ENCODE measurements at regions of chr2 and their contacts with region 1.

Region 1: GRCh38 chr2:189049709-189050164 is 75.6 kb downstream of the COL3A1 start:
- DNase-seq: no peak
- H3K4me3 ChIP-seq: no peak overlapping the region
- H3K27ac ChIP-seq: no peak overlapping the region
- H3K4me1 ChIP-seq: no peaks in the 10 kb centered on the region
- H3K27me3 ChIP-seq: no peaks in the 10 kb centered on the region
- CTCF ChIP-seq: no peak
- POLR2A ChIP-seq: no peak

Region 2: DNA sequence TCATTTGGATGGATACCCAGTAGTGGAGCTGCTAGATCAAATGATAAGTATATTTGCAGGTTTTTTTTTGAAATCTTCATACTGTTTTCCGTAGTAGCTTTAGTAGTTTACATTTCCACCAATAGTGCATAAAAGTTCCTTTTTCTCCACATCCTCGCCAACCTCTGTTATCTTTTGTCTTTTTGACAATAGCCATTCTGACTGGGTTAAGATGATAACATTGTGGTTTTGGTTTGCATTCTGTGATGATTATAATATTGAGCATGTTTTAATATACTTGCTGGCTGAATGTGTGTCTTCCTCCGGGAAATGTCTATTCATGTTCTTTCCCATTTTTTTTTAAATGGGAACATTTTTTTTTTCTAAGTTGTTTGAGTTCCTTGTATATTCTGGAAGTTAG is 498.1 kb before region 1 on chr2:
- intact Hi-C with region 1: loop called (anchors 10 kb)
- DNase-seq: no peak
- H3K4me3 ChIP-seq: no peak overlapping the region
- H3K27ac ChIP-seq: no peak overlapping the region
- H3K4me1 ChIP-seq: no peaks in the 10 kb centered on the region
- H3K27me3 ChIP-seq: no peaks in the 10 kb centered on the region
- CTCF ChIP-seq: no peak
- POLR2A ChIP-seq: no peak

Measured in breast epithelium (tissue), 4 donors.